Sigmoid colon (tissue), 7 donors: ENCODE measurements at regions of chr11 and their contacts with region 1.

Region 1: GRCh38 chr11:128172046-128172878 is 415.1 kb downstream of the ETS1 start:
- DNase-seq: peak; percentile 86
- H3K4me3 ChIP-seq: no peak overlapping the region
- H3K27ac ChIP-seq: no peak overlapping the region
- H3K4me1 ChIP-seq: no peaks in the 10 kb centered on the region
- H3K27me3 ChIP-seq: no peaks in the 10 kb centered on the region
- CTCF ChIP-seq: peak; percentile 60 to 70 (median 64)
- EP300 ChIP-seq: no peak
- POLR2A ChIP-seq: no peak

Region 2: GRCh38 chr11:128290106-128290840 is 118.0 kb after region 1 on chr11:
- intact Hi-C with region 1: loop called (anchors 5 kb)
- DNase-seq: peak; percentile 78
- H3K4me3 ChIP-seq: peak overlapping the region in 2 of 4 donors; percentile 22 to 25
- H3K27ac ChIP-seq: peak overlapping the region; percentile 30 to 68 (median 54)
- H3K4me1 ChIP-seq: peaks cover 0 to 21% (median 15%) of the 10 kb centered on the region in 4 donors
- H3K27me3 ChIP-seq: no peaks in the 10 kb centered on the region
- CTCF ChIP-seq: peak; percentile 80 to 85 (median 84)
- EP300 ChIP-seq: no peak
- POLR2A ChIP-seq: no peak

Region 3: DNA sequence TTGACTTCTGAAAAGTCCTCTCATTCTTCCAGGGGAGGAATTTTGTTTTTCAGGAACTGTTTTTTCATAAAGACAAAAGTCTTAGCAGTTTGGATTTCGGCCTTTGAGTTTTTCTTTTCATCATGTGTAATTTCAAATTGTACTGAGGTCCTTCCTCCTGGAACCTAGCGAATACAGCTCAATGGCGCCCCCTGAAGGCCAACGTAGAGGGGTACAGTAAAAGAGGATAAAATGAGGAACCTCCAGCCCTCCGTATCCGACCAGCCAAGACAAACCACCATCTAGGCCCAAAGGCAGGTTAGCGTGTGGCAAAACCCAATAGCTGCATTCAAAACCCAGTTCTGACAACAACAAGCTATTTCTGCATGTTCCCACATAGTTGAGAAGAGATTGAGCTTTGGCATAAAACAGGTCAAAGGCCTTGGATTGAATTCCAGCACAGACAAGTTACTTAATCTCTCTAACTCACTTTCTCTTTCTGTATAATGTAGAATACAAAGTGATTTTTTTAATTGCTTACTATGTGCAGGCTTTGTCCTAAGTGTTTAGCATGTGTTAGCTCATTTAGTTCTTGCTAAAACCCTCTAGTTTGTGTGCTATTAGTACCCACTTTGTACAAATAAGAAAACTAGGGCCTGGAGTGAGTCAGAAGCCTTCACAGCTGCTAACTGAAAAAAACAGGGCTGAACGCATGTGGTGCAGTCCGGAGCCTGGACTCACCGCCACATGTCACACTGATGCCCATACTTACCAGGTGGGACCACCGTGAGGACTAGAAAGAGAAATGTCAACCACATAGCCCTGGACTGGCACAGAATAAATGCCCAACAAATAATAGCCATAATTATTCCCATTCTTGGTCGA is 458.3 kb after region 1 on chr11:
- intact Hi-C with region 1: loop called (anchors 1 kb)
- DNase-seq: peak; percentile 94
- H3K4me3 ChIP-seq: no peak overlapping the region
- H3K27ac ChIP-seq: peak overlapping the region in 2 of 4 donors; percentile 3 to 35
- H3K4me1 ChIP-seq: peaks cover 0 to 12% (median 3%) of the 10 kb centered on the region in 4 donors
- H3K27me3 ChIP-seq: no peaks in the 10 kb centered on the region
- CTCF ChIP-seq: peak; percentile 74 to 92 (median 87)
- EP300 ChIP-seq: no peak
- POLR2A ChIP-seq: no peak